T-cell (primary cell): ENCODE measurements at regions of chr2 and their contacts with region 1.

Region 1: DNA sequence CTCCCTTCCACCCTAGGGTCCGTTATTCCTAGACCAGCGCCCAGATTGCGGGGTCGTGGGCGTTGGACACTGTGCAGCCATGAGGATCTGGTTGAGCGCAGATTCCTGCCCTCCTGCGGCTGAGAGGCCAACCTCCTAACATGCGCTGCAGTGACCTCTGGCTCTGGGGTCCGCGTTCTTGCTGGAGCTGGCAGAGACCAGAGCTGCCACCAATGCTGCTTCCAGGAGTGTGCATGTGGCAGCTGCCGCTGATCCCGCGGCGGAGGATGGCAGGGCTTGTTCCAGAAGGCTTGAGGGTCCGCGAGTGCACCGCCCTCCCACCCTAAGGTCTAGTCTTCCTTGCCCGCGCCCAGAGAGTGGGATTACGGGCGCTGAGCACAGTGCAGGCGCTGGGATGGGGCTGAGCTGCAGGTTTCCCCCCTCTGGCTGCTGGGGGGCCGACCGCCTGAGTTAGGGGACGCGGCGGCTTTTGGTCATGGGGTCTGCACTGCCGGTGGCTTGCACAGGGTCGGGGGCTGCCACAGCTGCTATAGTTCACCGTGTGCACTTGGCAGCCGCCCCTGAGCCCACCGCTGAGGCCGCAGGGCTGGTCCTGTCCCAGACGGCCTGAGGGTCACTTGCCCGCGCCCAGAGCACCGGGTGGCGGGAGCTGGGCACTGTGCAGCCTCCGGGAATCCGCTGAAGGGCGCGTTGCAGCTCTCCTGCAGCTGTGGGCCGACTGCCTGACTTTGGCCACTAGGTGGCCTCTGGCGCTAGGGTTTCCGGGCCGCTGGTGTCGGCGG is 145.9 kb downstream of the CCDC74A start:
- DNase-seq: peak in 28 of 35 experiments; percentile 17 to 67 (median 40)
- ATAC-seq: peak; percentile 62 to 72 (median 68)
- H3K4me3 ChIP-seq: peak overlapping the region; percentile 21 to 28
- H3K4me3 Mint-ChIP-seq: peak overlapping the region; percentile 52 to 74 (median 59)
- H3K27ac ChIP-seq: no peak overlapping the region
- H3K27ac Mint-ChIP-seq: no peak overlapping the region
- H3K4me1 ChIP-seq: peaks cover 0 to 23% of the 10 kb centered on the region in 2 experiments
- H3K4me1 Mint-ChIP-seq: peaks cover 6 to 13% (median 6%) of the 10 kb centered on the region in 3 donors
- H3K27me3 ChIP-seq: peaks cover 2 to 45% of the 10 kb centered on the region in 2 experiments
- H3K27me3 Mint-ChIP-seq: peaks cover 20 to 21% of the 10 kb centered on the region in 2 donors

Region 2: DNA sequence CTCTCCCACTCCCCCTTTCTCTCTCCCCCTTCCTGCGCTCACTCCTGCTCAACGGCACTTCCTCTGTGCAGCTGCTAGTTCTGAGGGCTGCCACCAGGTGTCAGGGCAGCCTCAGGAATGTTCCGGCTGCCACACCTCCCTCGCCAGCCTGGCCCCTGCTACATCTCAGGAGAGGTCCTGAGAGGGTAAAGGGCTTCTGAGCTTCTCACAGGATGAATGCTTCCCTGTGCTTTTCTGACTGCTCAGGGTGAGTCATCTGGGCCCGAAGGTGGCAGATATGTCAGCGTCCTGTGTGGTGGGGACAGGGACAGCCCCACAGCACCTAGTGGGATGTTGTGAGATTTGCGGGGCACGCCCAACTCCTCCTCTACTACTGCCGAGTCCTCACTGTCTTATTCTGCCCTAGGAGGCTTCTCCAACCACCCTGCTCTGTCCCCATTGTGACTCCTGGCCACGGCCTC is 519.5 kb before region 1 on chr2:
- CTCF ChIA-PET with region 1: interaction called, 5 to 16 read pairs
- POLR2A ChIA-PET with region 1: no interaction called
- DNase-seq: peak in 34 of 35 experiments; percentile 22 to 78 (median 49)
- ATAC-seq: peak; percentile 82 to 90 (median 84)
- H3K4me3 ChIP-seq: no peak overlapping the region
- H3K4me3 Mint-ChIP-seq: no peak overlapping the region
- H3K27ac ChIP-seq: no peak overlapping the region
- H3K27ac Mint-ChIP-seq: peak overlapping the region in 1 of 2 donors; percentile 12
- H3K4me1 ChIP-seq: peaks cover 0 to 22% of the 10 kb centered on the region in 2 experiments
- H3K4me1 Mint-ChIP-seq: peaks cover 0 to 28% (median 17%) of the 10 kb centered on the region in 3 donors
- H3K27me3 ChIP-seq: peaks cover 0 to 4% of the 10 kb centered on the region in 2 experiments
- H3K27me3 Mint-ChIP-seq: no peaks in the 10 kb centered on the region